Keratinocyte (primary cell): ENCODE measurements at regions of chr5 and their contacts with region 1.

Region 1: GRCh38 chr5:149852641-149853330 is 91.8 kb downstream of the PDE6A start:
- DNase-seq: no peak
- H3K4me3 ChIP-seq: no peak overlapping the region
- H3K27ac ChIP-seq: no peak overlapping the region
- H3K4me1 ChIP-seq: no peaks in the 10 kb centered on the region
- H3K27me3 ChIP-seq: no peaks in the 10 kb centered on the region
- CTCF ChIP-seq: peak; percentile 89 to 95 (median 95)

Region 2: GRCh38 chr5:149749481-149750365 is 103.1 kb before region 1 on chr5:
- dilution Hi-C with region 1: no loop called
- DNase-seq: no peak
- H3K4me3 ChIP-seq: no peak overlapping the region
- H3K27ac ChIP-seq: no peak overlapping the region
- H3K4me1 ChIP-seq: peaks cover 14% of the 10 kb centered on the region
- H3K27me3 ChIP-seq: no peaks in the 10 kb centered on the region
- CTCF ChIP-seq: no peak

Region 3: DNA sequence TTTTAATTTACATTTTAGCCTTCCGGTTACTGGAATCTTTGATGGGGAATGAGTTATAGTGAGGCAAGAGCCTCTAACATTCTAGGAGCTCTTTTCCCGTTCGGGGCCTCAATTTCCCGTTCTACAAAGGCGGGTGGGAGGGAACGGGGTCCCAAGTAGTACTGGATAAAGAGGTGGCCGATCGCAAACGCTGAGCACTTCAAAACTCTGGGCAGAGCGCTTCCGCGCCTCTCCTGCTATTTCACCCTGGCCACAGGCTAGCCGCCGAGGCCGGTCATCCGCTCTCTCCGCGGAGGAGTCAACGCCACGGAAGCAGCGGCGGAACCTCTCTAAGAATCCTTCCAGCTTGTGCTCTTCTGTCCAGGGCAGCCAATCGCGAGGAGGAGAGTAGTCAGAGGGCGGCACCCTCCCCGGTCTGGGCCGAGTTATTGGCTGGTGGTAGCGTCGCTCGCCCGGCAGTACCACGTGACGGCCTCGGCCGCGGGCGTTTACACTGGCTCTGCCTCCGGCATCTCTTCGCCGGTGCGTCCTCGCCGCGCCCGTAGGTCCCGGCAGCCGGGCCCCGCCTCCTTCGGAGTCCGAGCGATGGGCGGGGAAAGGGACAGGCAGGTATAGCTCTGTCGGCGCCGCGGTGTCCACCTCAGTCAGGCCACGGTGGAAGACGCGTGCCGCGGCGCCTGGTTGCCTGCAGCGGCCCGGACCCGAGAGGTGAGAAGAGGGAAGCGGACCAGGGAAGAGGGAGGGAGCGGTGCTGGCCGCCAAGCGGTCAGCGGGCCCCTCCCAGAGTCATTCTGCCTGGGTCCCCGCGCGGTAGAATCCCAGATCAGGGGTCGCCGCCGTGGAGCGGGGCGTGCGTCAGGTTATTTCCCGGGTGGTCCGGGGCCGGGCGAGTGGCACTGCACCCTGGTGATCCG is 107.7 kb after region 1 on chr5 and contains the start of gene SLC26A2:
- dilution Hi-C with region 1: loop called (anchors 25 kb)
- DNase-seq: peak; percentile 75
- H3K4me3 ChIP-seq: peak within 1 kb of the TSS; percentile 70 to 81 (median 79)
- H3K27ac ChIP-seq: peak within 1 kb of the TSS; percentile 77
- H3K4me1 ChIP-seq: peaks cover 16% of the 10 kb centered on the region
- H3K27me3 ChIP-seq: no peaks in the 10 kb centered on the region
- CTCF ChIP-seq: no peak
- polyA plus RNA-seq, gene SLC26A2: 7.3 to 10.3 TPM (median 8.0 TPM) in 3 replicates